ENCODE measurements at regions of chr7 and their contacts with region 1.

Region 1: GRCh38 chr7:133081599-133082389 is at the start of gene CHCHD3:
- DNase-seq: peak; percentile 98
- ATAC-seq: peak; percentile 100
- H3K4me3 Mint-ChIP-seq: peak within 1 kb of the TSS; percentile 97
- H3K27ac Mint-ChIP-seq: peak within 1 kb of the TSS; percentile 89
- H3K4me1 Mint-ChIP-seq: peaks cover 22% of the 10 kb centered on the region
- H3K27me3 Mint-ChIP-seq: no peaks in the 10 kb centered on the region
- total RNA-seq, gene CHCHD3: 63.0 to 71.9 TPM

Region 2: GRCh38 chr7:132654150-132654549 is 427.6 kb before region 1 on chr7:
- CTCF ChIA-PET with region 1: interaction called, 3 read pairs
- POLR2A ChIA-PET with region 1: no interaction called
- intact Hi-C with region 1: loop called (anchors 5 kb)
- DNase-seq: peak; percentile 31
- ATAC-seq: peak; percentile 28
- H3K4me3 Mint-ChIP-seq: no peak overlapping the region
- H3K27ac Mint-ChIP-seq: peak overlapping the region; percentile 39
- H3K4me1 Mint-ChIP-seq: peaks cover 44% of the 10 kb centered on the region
- H3K27me3 Mint-ChIP-seq: no peaks in the 10 kb centered on the region

Region 3: GRCh38 chr7:132882714-132883428 is 198.9 kb before region 1 on chr7:
- CTCF ChIA-PET with region 1: no interaction called
- POLR2A ChIA-PET with region 1: no interaction called
- intact Hi-C with region 1: loop called in 1 of 2 experiments (anchors 1 kb)
- DNase-seq: peak; percentile 63
- ATAC-seq: peak; percentile 96
- H3K4me3 Mint-ChIP-seq: peak overlapping the region; percentile 38
- H3K27ac Mint-ChIP-seq: peak overlapping the region; percentile 76
- H3K4me1 Mint-ChIP-seq: peaks cover 33% of the 10 kb centered on the region
- H3K27me3 Mint-ChIP-seq: no peaks in the 10 kb centered on the region

Region 4: GRCh38 chr7:134126966-134127848 is 1045.4 kb after region 1 on chr7 and contains the start of gene LRGUK:
- CTCF ChIA-PET with region 1: interaction called, 3 read pairs
- POLR2A ChIA-PET with region 1: no interaction called
- intact Hi-C with region 1: loop called in 1 of 2 experiments (anchors 1 kb)
- DNase-seq: peak; percentile 89
- ATAC-seq: peak; percentile 100
- H3K4me3 Mint-ChIP-seq: peak within 1 kb of the TSS; percentile 76
- H3K27ac Mint-ChIP-seq: no peak within 1 kb of the TSS
- H3K4me1 Mint-ChIP-seq: peaks cover 16% of the 10 kb centered on the region
- H3K27me3 Mint-ChIP-seq: peaks cover 16% of the 10 kb centered on the region
- total RNA-seq, gene LRGUK: 0.07 to 0.14 TPM

Region 5: GRCh38 chr7:134458806-134459698 is 1377.3 kb after region 1 on chr7 and contains the start of gene AKR1B1:
- CTCF ChIA-PET with region 1: no interaction called
- POLR2A ChIA-PET with region 1: no interaction called
- intact Hi-C with region 1: loop called in 1 of 2 experiments (anchors 5 kb)
- DNase-seq: peak; percentile 94
- ATAC-seq: peak; percentile 92
- H3K4me3 Mint-ChIP-seq: peak within 1 kb of the TSS; percentile 83
- H3K27ac Mint-ChIP-seq: peak within 1 kb of the TSS; percentile 76
- H3K4me1 Mint-ChIP-seq: peaks cover 51% of the 10 kb centered on the region
- H3K27me3 Mint-ChIP-seq: no peaks in the 10 kb centered on the region
- total RNA-seq, gene AKR1B1: 88.1 to 120 TPM

Measured in activated CD4-positive, alpha-beta T cell treated with anti-CD3 and anti-CD28 coated beads for 36 hours (primary cell).